ENCODE measurements at regions of chr15 and their contacts with region 1.

Region 1: DNA sequence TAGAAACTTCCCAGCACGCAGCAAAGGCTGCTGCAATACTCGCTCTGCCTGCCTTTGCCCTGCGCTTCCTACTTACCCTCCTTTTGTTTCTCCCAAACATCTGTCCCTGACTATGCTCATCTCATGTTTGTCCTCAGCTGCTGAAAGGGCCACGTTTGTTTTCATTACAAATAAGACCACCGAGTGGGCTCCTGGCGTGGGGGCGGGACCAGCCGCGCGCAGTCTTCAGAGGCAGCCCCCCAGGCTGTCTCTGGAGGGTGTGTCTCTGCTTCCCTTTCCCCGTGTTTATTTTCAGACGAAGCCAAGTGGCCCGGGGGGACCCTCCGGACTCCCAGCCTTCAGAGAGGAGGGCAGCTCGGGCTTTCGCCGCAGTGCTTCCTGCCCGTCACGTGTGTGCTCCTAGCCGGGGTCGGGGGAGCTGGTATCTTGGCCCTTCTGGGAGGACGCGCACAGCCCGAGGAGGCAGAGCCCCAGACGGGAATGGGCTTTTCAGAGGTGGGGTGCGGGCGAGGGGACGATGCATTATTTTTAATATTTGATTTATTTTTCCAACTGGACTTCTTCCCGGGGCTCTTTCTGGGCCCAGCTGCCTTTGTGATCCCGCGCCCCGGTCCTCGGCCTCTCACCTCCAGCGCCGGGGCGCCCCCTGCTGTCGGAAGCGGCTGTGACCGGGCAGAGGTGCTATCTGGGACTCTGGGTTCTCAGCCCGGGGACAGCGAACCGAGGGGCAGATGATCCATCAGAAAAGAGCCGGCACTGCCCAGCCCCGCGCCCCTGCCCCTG is 70.0 kb upstream of the CGNL1 start:
- H3K4me3 Mint-ChIP-seq: peak overlapping the region; percentile 82
- H3K27ac Mint-ChIP-seq: peak overlapping the region; percentile 86
- H3K4me1 Mint-ChIP-seq: peaks cover 62% of the 10 kb centered on the region
- H3K27me3 Mint-ChIP-seq: no peaks in the 10 kb centered on the region

Region 2: GRCh38 chr15:56491110-56491722 is 815.1 kb before region 1 on chr15:
- intact Hi-C with region 1: loop called (anchors 10 kb)
- H3K4me3 Mint-ChIP-seq: no peak overlapping the region
- H3K27ac Mint-ChIP-seq: no peak overlapping the region
- H3K4me1 Mint-ChIP-seq: peaks cover 6% of the 10 kb centered on the region
- H3K27me3 Mint-ChIP-seq: peaks cover 1% of the 10 kb centered on the region

Region 3: GRCh38 chr15:57227899-57228298 is 78.5 kb before region 1 on chr15:
- intact Hi-C with region 1: loop called (anchors 5 kb)
- H3K4me3 Mint-ChIP-seq: no peak overlapping the region
- H3K27ac Mint-ChIP-seq: no peak overlapping the region
- H3K4me1 Mint-ChIP-seq: no peaks in the 10 kb centered on the region
- H3K27me3 Mint-ChIP-seq: no peaks in the 10 kb centered on the region

Measured in dendritic cell treated with granulocyte-macrophage colony-stimulating factor and Interleukin-4, amounts not matched to agents 40 ng/mL and 50 ng/mL, for 4 days (primary cell).